ENCODE measurements at regions of chr7 and their contacts with region 1.

Region 1: DNA sequence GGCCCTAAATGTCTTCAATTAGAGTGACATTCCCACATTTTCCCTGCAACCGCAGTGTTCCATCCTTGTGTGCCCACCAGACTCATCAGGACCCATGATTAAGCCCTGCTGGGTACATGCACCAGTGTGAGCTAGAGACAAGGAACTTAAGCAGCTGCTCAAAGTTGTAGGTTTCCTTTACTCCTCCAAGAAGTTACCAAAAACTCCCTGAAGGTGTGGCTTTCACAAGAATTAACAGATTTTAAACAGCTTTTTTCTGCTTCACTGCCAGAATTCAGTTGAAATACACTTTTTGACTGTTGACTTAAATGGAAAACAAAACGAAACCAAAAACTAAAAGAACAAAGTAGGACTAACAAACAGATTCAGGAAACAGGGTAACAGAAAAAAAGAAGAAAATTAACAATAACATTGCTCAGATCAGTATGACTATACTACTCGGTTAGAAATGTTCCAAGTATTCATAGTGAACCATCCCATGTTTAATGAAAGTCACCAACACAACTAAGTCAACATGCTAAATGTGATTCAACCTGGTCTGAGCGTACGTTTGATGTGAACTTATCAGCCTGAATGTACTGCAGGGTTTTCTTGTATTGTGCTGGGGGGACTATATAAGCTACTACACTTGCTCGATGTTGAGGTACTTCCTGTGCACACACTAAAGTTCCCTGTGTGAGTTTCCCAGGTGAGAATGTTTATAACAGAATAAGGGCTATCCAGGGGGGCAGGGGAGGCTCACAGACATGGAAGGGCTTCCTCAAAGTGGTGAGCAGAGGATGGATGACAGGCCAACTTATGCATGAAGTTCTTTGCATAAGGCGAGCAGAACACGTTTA is 22.2 kb downstream of the SLC37A3 start:
- DNase-seq: peak; percentile 51
- ATAC-seq: peak; percentile 85
- H3K4me3 Mint-ChIP-seq: peak overlapping the region; percentile 73
- H3K27ac Mint-ChIP-seq: peak overlapping the region; percentile 95
- H3K4me1 Mint-ChIP-seq: peaks cover 49% of the 10 kb centered on the region
- H3K27me3 Mint-ChIP-seq: no peaks in the 10 kb centered on the region

Region 2: GRCh38 chr7:140358412-140359051 is 17.6 kb before region 1 on chr7:
- CTCF ChIA-PET with region 1: interaction called, 17 read pairs
- DNase-seq: peak; percentile 82
- ATAC-seq: peak; percentile 78
- H3K4me3 Mint-ChIP-seq: peak overlapping the region; percentile 74
- H3K27ac Mint-ChIP-seq: peak overlapping the region; percentile 99
- H3K4me1 Mint-ChIP-seq: peaks cover 40% of the 10 kb centered on the region
- H3K27me3 Mint-ChIP-seq: no peaks in the 10 kb centered on the region

Region 3: DNA sequence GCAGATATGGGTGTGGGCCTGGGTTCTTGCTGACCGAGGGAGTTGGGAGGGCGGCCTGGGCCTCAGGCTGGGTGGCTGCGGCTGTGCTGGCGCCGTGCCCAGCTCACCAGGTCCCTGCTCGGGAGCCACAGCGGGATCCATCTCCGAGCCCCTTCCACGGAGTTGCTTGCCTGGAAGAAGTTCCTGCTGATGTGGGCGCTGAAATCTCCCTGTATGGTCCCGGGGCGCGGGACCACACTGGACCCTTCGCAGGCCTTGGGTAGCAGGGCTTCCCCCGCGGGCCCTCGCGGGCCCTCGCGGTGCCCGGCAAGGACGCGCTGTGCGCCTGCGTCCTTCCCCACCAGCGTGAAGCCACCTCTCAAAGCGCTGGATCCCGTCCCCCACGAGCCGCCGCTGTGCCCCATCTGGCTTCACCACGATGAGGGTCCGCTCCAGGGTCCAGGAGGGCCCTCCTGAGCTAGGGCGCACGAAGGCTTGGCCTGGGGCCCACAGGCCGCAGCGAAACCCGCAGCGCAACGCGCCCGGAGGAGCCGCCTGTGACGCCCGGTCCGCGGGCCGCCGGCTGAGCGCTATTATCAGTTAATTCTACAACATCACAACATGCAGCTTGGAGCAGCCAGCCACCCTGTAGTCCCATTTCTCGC is 59.3 kb after region 1 on chr7:
- CTCF ChIA-PET with region 1: no interaction called
- DNase-seq: no peak
- ATAC-seq: no peak
- H3K4me3 Mint-ChIP-seq: no peak overlapping the region
- H3K27ac Mint-ChIP-seq: no peak overlapping the region
- H3K4me1 Mint-ChIP-seq: peaks cover 4% of the 10 kb centered on the region
- H3K27me3 Mint-ChIP-seq: peaks cover 2% of the 10 kb centered on the region